Activated CD8-positive, alpha-beta T cell treated with anti-CD3 and anti-CD28 coated beads, Interleukin-2, amount 10 ng/mL, durations not matched to agents 7 days and 5 days (primary cell): ENCODE measurements at regions of chr2 and their contacts with region 1.

Region 1: DNA sequence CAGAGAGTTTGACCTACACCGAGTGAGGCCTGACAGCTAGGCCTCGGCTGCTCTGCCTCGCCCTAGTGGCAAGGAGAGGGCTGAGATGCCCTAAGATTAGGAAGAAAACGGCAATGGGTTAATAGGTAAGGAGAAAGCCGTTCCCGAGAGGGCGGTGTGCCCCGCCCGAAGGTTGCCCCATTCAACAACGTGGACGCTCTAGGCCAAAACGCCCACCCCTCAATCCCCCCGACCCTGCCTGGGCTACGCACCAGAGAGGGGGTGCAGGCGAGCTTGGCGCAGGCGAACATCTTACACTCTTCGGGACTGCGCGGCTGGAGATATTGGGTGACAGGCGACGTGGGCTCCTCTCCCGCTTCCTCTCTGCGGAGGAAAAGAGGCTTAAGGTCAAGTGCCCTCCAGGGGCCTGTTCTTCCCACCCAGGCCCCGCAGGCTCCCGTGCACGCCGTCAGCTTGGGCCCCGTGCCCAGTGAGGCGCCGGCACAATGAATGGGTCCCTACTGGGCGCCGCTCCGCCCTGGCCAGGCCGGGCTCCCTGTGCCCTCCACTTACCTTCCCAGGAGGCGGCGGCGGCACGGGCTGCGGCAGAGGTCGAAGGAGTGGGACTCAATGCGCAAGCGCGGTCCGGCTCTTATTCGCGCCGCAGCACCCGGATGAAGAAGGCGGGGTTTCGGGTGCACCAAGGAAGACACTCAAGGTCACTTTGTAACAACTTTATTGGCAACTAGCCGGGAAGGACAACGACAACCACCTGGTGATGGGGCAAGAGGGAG is at the start of gene ATP5MC3:
- DNase-seq: peak; percentile 95
- ATAC-seq: peak; percentile 92
- H3K4me3 Mint-ChIP-seq: peak within 1 kb of the TSS; percentile 83
- H3K27ac Mint-ChIP-seq: peak within 1 kb of the TSS; percentile 76
- H3K4me1 Mint-ChIP-seq: peaks cover 42% of the 10 kb centered on the region
- H3K27me3 Mint-ChIP-seq: no peaks in the 10 kb centered on the region
- total RNA-seq, gene ATP5MC3: 293 to 310 TPM

Region 2: GRCh38 chr2:175154661-175155082 is 26.6 kb before region 1 on chr2:
- CTCF ChIA-PET with region 1: no interaction called
- POLR2A ChIA-PET with region 1: no interaction called
- DNase-seq: no peak
- ATAC-seq: peak; percentile 77
- H3K4me3 Mint-ChIP-seq: no peak overlapping the region
- H3K27ac Mint-ChIP-seq: no peak overlapping the region
- H3K4me1 Mint-ChIP-seq: peaks cover 18% of the 10 kb centered on the region
- H3K27me3 Mint-ChIP-seq: no peaks in the 10 kb centered on the region

Region 3: GRCh38 chr2:175167792-175168563 is 13.3 kb before region 1 on chr2 and contains the start of gene ATF2:
- CTCF ChIA-PET with region 1: interaction called, 8 read pairs
- POLR2A ChIA-PET with region 1: interaction called, 19 read pairs
- DNase-seq: peak; percentile 99
- ATAC-seq: peak; percentile 93
- H3K4me3 Mint-ChIP-seq: peak within 1 kb of the TSS; percentile 95
- H3K27ac Mint-ChIP-seq: peak within 1 kb of the TSS; percentile 97
- H3K4me1 Mint-ChIP-seq: peaks cover 42% of the 10 kb centered on the region
- H3K27me3 Mint-ChIP-seq: no peaks in the 10 kb centered on the region
- total RNA-seq, gene ATF2: 58.5 to 59.9 TPM